Right cardiac atrium (tissue), 5 donors: ENCODE measurements at regions of chr9 and their contacts with region 1.

Region 1: DNA sequence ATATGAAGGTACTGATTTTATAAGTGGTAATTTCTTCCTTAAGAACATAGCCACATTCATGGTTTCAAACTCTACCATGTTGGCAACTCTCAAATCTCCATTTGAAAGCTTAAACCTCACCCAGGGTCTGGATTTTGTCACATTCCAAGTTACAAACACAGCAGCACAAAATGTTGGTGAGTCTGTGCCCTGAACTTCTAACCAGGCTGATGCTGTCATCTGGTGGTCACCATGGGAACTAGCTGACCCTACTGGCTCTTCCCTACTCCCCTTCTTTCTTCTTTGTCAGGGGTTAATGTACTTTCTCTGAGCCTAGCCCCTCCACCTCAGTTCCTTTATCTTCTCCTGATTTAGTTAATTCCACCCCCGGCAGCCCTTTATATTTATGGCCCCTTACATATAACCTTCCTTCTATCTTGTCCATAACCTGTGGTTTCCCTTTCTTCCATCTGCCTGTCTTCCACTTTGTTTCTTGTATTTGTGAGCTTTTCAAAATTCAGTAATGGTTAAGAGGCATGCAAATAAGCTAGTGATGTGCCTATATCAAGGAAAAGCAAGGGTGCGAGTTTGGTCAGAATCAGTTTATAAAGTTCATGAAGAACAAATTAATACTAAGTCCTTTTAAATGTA is 35.9 kb downstream of the TGFBR1 start:
- DNase-seq: peak in 1 of 3 donors; percentile 27
- ATAC-seq: peak; percentile 85 to 86
- H3K4me3 ChIP-seq: no peak overlapping the region
- H3K27ac ChIP-seq: no peak overlapping the region
- H3K4me1 ChIP-seq: no peaks in the 10 kb centered on the region
- H3K27me3 ChIP-seq: no peaks in the 10 kb centered on the region

Region 2: GRCh38 chr9:98848450-98849149 is 292.2 kb before region 1 on chr9:
- intact Hi-C with region 1: loop called (anchors 2 to 10 kb)
- DNase-seq: peak; percentile 93 to 97 (median 96)
- ATAC-seq: peak; percentile 98
- H3K4me3 ChIP-seq: peak overlapping the region; percentile 23
- H3K27ac ChIP-seq: no peak overlapping the region
- H3K4me1 ChIP-seq: no peaks in the 10 kb centered on the region
- H3K27me3 ChIP-seq: no peaks in the 10 kb centered on the region

Region 3: GRCh38 chr9:98974994-98975712 is 165.6 kb before region 1 on chr9:
- intact Hi-C with region 1: loop called in 1 of 4 experiments (anchors 10 kb)
- DNase-seq: peak; percentile 82 to 94 (median 94)
- ATAC-seq: peak; percentile 64 to 72
- H3K4me3 ChIP-seq: no peak overlapping the region
- H3K27ac ChIP-seq: peak overlapping the region; percentile 29
- H3K4me1 ChIP-seq: peaks cover 25% of the 10 kb centered on the region
- H3K27me3 ChIP-seq: no peaks in the 10 kb centered on the region

Region 4: DNA sequence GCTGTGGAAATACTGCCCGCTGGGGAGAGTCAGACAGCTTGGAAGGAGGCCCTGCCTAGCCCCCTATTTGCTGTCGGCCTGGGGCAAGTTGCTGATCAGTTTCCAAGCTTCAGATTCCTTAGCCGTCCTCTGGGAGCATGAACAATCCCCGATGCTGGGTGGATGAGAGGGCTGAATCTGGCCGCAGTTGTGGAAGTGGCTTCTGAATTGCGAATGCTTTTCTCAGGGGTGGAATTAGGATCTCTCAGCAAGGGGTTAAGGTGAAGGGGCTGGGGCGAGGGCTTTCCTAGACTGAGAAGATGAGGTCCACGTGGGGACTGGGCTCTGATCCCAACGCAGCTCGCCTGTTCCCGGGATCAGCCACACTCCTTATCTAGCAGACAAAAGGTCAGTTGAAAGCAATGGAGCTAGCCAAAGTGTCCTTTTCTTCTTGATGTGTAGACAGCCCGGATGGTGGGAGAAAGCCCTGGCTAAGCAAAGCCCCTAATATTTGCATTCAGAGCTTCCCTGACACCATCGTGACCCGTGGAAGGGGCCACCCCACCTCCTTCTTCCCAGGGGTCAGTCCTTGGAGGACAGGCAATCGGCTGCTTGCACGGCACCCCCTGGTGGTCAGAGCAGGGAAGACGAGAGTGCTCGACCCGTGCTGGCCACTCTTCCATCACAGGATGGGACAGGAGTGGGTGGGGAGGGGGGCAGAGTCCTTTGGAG is 142.2 kb before region 1 on chr9:
- intact Hi-C with region 1: loop called in 3 of 4 experiments (anchors 5 to 10 kb)
- DNase-seq: peak; percentile 91 to 95 (median 95)
- ATAC-seq: peak; percentile 86 to 88
- H3K4me3 ChIP-seq: no peak overlapping the region
- H3K27ac ChIP-seq: peak overlapping the region; percentile 54
- H3K4me1 ChIP-seq: peaks cover 7% of the 10 kb centered on the region
- H3K27me3 ChIP-seq: no peaks in the 10 kb centered on the region